HepG2 (cell line): ENCODE measurements at regions of chr10 and their contacts with region 1.

Region 1: GRCh38 chr10:114304017-114304570 is 65.0 kb downstream of the VWA2 start:
- DNase-seq: peak; percentile 62
- ATAC-seq: peak; percentile 86
- H3K4me3 ChIP-seq: no peak overlapping the region
- H3K27ac ChIP-seq: no peak overlapping the region
- H3K4me1 ChIP-seq: peaks cover 5% of the 10 kb centered on the region; the same call in 1 of the 2 replicates
- H3K27me3 ChIP-seq: peaks cover 2 to 46% of the 10 kb centered on the region in 2 experiments
- CTCF ChIP-seq: peak; percentile 89
- EP300 ChIP-seq: no peak
- POLR2A ChIP-seq: no peak
- RAD21 ChIP-seq: peak; percentile 68

Region 2: GRCh38 chr10:113704637-113705343 is 599.3 kb before region 1 on chr10:
- CTCF ChIA-PET with region 1: no interaction called
- POLR2A ChIA-PET with region 1: no interaction called
- in situ Hi-C with region 1: no loop called
- intact Hi-C with region 1: no loop called
- DNase-seq: peak; percentile 27
- ATAC-seq: peak; percentile 80
- H3K4me3 ChIP-seq: no peak overlapping the region
- H3K27ac ChIP-seq: no peak overlapping the region
- H3K4me1 ChIP-seq: no peaks in the 10 kb centered on the region
- H3K27me3 ChIP-seq: no peaks in the 10 kb centered on the region
- CTCF ChIP-seq: peak; percentile 65
- EP300 ChIP-seq: no peak
- POLR2A ChIP-seq: no peak
- RAD21 ChIP-seq: no peak

Region 3: GRCh38 chr10:114208351-114208750 is 95.7 kb before region 1 on chr10:
- CTCF ChIA-PET with region 1: no interaction called
- POLR2A ChIA-PET with region 1: no interaction called
- in situ Hi-C with region 1: no loop called
- intact Hi-C with region 1: no loop called
- DNase-seq: no peak
- ATAC-seq: no peak
- H3K4me3 ChIP-seq: no peak overlapping the region
- H3K27ac ChIP-seq: no peak overlapping the region
- H3K4me1 ChIP-seq: no peaks in the 10 kb centered on the region
- H3K27me3 ChIP-seq: peaks cover 0 to 43% of the 10 kb centered on the region in 2 experiments; a peak in 3 of 5 replicates
- CTCF ChIP-seq: no peak
- EP300 ChIP-seq: no peak
- POLR2A ChIP-seq: no peak
- RAD21 ChIP-seq: no peak

Region 4: GRCh38 chr10:114458955-114459354 is 154.9 kb after region 1 on chr10:
- CTCF ChIA-PET with region 1: no interaction called
- POLR2A ChIA-PET with region 1: no interaction called
- in situ Hi-C with region 1: no loop called
- intact Hi-C with region 1: loop called (anchors 5 kb)
- DNase-seq: peak; percentile 8
- ATAC-seq: peak; percentile 46; the same call in 1 of the 3 replicates
- H3K4me3 ChIP-seq: no peak overlapping the region
- H3K27ac ChIP-seq: no peak overlapping the region
- H3K4me1 ChIP-seq: no peaks in the 10 kb centered on the region
- H3K27me3 ChIP-seq: no peaks in the 10 kb centered on the region
- CTCF ChIP-seq: peak; percentile 52
- EP300 ChIP-seq: no peak
- POLR2A ChIP-seq: no peak
- RAD21 ChIP-seq: no peak

Region 5: GRCh38 chr10:114703377-114704107 is 399.4 kb after region 1 on chr10:
- CTCF ChIA-PET with region 1: interaction called, 8 read pairs
- POLR2A ChIA-PET with region 1: no interaction called
- in situ Hi-C with region 1: loop called (anchors 10 kb)
- intact Hi-C with region 1: no loop called
- DNase-seq: peak; percentile 13
- ATAC-seq: peak; percentile 53
- H3K4me3 ChIP-seq: no peak overlapping the region
- H3K27ac ChIP-seq: no peak overlapping the region
- H3K4me1 ChIP-seq: no peaks in the 10 kb centered on the region
- H3K27me3 ChIP-seq: 0 out of 5 replicates have a peak, but pooled peaks cover 0 to 4% of the 10 kb centered on the region in 2 experiments
- CTCF ChIP-seq: peak; percentile 75
- EP300 ChIP-seq: no peak
- POLR2A ChIP-seq: no peak
- RAD21 ChIP-seq: peak; percentile 64